ENCODE measurements at regions of chr7 and their contacts with region 1.

Region 1: GRCh38 chr7:152463709-152464311 is 28.0 kb upstream of the KMT2C start:
- DNase-seq: peak; percentile 100

Region 2: GRCh38 chr7:152180587-152180986 is 283.2 kb before region 1 on chr7:
- intact Hi-C with region 1: loop called (anchors 10 kb)
- DNase-seq: no peak

Region 3: DNA sequence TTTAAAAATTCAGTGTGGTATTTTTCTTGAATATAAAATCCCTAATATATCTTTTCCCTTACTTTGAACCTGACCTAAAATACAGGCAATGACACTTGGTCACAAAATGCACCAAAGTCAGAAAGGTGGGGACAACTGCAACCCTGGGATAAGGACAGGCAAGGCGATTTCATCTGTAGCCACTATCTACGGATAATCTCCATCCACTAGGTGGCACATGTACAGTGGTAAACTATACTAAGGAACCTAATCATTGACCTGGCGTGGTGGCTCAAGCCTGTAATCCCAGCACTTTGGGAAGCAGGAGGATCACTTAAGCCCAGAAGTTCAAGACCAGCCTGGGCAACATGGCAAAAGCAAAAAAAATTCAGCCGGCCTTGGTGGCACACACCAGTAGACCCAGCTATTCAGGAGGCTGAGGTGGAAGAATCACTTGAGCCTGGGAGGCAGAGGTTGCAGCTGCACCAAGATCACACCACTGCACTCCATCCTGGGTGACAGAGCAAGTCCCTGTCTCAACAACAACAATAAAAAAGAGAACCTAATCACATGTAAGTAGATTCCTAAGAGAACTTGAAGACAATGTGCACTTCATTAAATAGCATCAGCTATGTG is 126.9 kb before region 1 on chr7:
- intact Hi-C with region 1: loop called (anchors 10 kb)
- DNase-seq: no peak

Region 4: DNA sequence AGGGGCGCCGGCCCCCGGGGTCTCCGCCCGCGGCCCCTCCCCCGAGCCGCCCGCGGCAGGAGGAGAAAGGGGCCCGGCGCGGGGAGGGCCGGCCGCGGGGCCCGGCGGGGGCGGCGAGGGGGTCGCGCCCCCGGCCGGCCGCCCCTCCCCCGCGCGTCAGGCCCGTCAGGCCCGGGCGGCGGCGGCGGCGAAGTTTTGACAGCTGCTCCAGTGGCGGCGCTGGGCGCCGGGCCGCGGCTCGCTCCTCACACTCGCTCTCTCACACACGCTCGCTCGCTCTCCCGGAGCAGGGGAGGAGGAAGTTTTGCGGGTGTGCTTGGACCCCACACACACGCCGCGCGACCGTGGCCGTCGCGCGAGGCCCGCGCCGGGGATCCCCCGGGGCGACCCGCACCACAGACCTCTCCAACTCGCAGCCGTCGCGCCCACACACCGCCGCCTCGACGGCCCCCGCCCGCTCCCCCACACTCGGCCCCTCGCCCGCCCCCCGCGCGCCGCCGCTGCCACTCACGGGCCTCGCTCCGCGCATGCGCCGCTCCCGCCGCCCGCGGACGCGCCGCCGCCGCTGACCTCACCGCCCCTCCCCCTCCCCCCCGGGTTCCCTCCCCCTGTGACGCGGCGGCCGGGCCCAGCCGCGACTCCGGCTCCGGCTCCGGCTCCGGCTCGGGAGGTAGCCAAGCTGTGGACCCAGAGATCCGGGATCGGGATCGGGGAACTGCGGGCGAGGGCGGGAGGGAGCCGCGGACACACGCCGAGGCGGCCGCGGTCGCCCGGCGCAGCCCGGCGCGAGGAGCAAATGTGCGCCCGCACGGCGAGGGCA is 27.5 kb before region 1 on chr7:
- intact Hi-C with region 1: loop called (anchors 1 kb)
- DNase-seq: peak; percentile 96

Region 5: DNA sequence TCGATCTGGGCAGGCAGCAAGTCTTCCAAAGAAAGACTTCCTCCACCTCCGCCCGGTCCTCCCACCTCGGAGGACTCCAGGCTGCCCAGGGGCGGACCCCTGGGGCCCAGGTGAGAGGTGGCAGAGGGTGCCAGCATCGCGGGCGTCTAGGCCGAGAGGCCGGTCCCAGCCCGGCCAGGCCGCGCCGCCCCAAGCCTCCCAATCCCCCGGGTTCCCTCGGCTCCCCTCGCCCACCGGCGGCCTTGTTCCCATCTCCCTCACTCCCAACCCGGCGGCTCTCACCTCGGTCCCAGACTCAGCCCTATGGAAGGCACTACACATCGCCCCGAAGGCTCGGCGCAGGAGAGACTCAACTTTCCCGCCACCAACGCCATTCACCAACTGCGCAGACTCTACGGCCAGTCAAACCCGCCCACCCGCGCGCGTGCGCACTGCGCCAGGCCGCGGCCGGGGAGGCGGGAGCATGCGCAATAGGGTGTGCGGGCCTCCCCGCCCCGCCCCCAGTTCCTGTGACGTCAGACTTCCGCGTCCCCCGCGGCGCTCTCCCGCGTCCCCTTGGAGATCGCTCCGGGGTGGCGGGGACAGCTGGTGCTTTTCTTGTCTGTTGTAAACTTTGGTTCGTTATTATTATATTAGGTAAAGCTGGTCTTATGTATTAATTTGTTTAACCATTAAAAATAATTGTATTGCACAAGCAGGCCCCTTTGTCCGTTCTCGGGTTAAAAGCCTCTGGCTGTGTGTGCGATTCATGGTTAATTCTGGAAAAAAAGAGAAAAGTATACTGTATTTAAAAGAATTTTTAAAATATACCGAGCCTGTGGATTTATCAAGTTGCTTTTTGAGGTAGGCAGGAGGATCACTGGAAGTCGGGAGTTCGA is 212.2 kb after region 1 on chr7 and contains the start of gene XRCC2:
- intact Hi-C with region 1: loop called (anchors 1 kb)
- DNase-seq: peak; percentile 96
- total RNA-seq, gene XRCC2: 0.24 TPM

Region 6: DNA sequence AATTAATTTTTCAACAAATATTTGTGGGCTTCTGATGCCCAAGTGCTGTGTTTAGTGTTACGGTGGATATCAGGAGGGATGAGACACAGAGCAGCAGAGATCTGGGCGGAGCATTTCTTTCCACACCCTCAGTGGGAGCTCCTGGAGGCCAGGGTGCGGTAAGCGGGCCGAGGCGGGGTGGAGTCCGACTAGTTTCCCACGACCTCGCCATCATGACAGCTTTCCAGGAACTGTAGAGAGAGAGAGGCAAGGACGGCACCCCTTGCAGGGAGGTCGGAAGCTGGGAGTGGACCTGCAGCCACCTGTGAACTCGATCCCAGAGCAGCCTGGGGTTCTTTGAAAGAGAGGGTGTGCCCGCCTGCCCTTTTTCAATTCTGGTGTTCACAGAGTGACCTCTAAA is 424.0 kb after region 1 on chr7:
- intact Hi-C with region 1: no loop called
- DNase-seq: no peak